ENCODE measurements at regions of chrX and their contacts with region 1.

Region 1: DNA sequence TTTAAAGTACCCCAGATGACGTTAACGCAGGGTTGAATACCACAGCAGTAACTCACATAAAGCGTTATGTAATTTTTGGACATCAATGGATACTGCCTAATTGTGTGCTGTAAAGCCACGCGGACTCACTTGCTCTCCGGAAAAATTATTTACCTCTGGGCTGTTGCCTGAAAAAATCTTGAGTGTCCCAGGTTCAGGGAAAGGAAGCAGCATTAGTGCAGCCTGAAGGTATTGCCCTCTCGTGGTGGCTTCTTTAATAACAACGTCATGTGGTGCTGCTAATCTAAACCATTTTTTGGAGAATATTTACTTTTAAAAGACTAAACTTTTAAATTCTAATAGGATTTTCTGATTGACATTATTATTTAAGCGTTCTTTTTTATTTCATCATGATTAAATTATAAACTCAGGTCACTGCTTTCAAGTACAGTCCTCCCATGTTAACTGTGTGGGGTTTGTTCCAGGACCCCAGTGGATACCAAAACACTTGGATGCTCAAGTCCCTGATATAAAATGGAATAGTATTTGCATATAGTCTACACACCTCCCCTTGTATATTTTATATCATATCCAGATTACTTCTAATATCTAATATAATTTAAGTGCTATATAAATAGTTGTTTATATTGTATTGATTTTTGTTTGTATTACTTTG is 384.8 kb downstream of the FAM133A start:
- DNase-seq: no peak
- ATAC-seq: no peak
- H3K4me3 ChIP-seq: no peak overlapping the region
- H3K27ac ChIP-seq: no peak overlapping the region
- H3K4me1 ChIP-seq: no peaks in the 10 kb centered on the region
- H3K27me3 ChIP-seq: peaks cover 0 to 3% (median 0%) of the 10 kb centered on the region in 9 donors
- CTCF ChIP-seq: peak in 6 of 12 donors; percentile 14 to 44 (median 36)
- POLR2A ChIP-seq: no peak

Region 2: DNA sequence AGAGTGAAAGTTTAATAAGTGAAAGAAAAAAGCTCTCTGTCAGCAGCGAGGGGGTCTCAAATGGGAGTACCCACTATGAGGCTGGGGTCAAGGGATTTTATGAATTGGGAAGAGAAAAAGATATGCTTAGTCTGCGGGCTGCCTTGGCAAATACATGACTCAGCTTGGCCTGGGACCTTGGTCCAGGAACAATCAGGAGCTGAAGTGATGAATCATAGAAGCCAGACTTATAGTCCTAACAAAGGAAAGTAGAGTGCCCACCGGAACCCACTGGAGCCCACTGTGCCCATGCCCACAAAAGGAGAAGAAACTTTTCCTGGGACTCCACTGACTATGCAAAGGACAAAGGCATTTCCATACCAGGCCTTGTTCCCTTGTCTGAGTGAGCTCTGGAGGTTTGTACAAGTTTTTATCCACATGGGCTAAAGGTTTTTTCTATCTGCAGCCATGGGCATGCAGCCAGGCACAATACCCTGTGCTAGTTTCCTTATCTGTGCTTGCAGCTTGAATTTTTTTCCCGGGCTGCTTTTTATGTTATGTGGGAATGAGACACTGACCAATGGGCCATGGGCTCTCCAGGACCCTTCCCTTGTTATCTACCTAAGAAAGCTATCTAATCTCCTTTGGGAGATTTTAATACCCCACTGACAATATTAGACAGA is 183.1 kb before region 1 on chrX:
- intact Hi-C with region 1: loop called in 1 of 10 experiments (anchors 5 kb)
- DNase-seq: no peak
- ATAC-seq: no peak
- H3K4me3 ChIP-seq: no peak overlapping the region
- H3K27ac ChIP-seq: no peak overlapping the region
- H3K4me1 ChIP-seq: no peaks in the 10 kb centered on the region
- H3K27me3 ChIP-seq: peaks cover 0 to 9% (median 0%) of the 10 kb centered on the region in 9 donors
- CTCF ChIP-seq: no peak
- POLR2A ChIP-seq: no peak

Measured in heart left ventricle (tissue), 16 donors.